ENCODE measurements at regions of chr16 and their contacts with region 1.

Region 1: GRCh38 chr16:31458844-31459721 is at the start of gene ARMC5:
- DNase-seq: peak; percentile 98
- ATAC-seq: peak; percentile 81
- H3K4me3 Mint-ChIP-seq: peak within 1 kb of the TSS; percentile 85
- H3K27ac Mint-ChIP-seq: peak within 1 kb of the TSS; percentile 94
- H3K4me1 Mint-ChIP-seq: peaks cover 42% of the 10 kb centered on the region
- H3K27me3 Mint-ChIP-seq: no peaks in the 10 kb centered on the region
- total RNA-seq, gene ARMC5: 7.0 to 7.9 TPM

Region 2: DNA sequence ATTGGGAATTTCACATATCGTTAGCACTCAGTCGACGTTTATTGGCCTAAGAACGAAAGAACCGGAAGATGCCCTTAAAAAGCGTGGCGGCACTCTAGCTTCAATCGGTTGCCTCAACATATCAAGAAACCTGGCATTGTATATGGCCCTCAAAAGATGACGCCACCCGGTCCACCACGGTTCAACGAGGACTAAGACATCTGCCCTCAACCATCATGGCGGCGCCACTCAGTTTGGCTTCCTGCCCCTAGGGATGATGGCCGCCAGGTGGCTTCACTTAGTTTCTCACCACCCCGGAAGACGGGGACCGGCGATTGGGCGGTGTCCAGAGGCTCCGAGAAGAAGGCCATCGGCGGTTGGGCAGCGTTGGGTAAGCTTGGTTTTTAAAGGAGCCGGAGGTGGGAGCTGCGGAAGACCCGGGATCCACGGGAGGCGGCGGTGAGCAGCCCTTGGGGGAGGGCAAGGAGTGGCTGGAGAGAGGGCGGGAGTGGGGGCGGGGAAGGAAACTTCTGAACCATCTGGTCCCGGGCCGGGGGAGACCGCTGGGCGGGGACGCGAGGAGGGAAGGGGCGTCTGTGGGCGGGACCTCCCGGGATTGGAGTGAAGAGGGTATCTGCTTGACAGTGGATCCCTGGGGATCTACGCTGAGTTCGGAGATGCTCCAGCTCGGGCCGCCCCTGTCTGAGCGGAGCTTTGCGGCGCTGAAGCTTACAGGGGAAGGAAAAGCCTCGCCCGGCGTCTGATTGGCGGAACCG is 808.5 kb before region 1 on chr16 and contains the start of gene PRR14:
- CTCF ChIA-PET with region 1: no interaction called
- POLR2A ChIA-PET with region 1: no interaction called
- intact Hi-C with region 1: loop called in 1 of 2 experiments (anchors 2 kb)
- DNase-seq: peak; percentile 100
- ATAC-seq: peak; percentile 82
- H3K4me3 Mint-ChIP-seq: peak within 1 kb of the TSS; percentile 95
- H3K27ac Mint-ChIP-seq: peak within 1 kb of the TSS; percentile 97
- H3K4me1 Mint-ChIP-seq: peaks cover 21% of the 10 kb centered on the region
- H3K27me3 Mint-ChIP-seq: no peaks in the 10 kb centered on the region
- total RNA-seq, gene PRR14: 76.8 to 77.8 TPM

Region 3: GRCh38 chr16:30997000-30997886 is 461.8 kb before region 1 on chr16:
- CTCF ChIA-PET with region 1: no interaction called
- POLR2A ChIA-PET with region 1: no interaction called
- intact Hi-C with region 1: loop called in 1 of 2 experiments (anchors 1 kb)
- DNase-seq: peak; percentile 94
- ATAC-seq: peak; percentile 95
- H3K4me3 Mint-ChIP-seq: peak overlapping the region; percentile 72
- H3K27ac Mint-ChIP-seq: no peak overlapping the region
- H3K4me1 Mint-ChIP-seq: peaks cover 16% of the 10 kb centered on the region
- H3K27me3 Mint-ChIP-seq: peaks cover 3% of the 10 kb centered on the region

Region 4: DNA sequence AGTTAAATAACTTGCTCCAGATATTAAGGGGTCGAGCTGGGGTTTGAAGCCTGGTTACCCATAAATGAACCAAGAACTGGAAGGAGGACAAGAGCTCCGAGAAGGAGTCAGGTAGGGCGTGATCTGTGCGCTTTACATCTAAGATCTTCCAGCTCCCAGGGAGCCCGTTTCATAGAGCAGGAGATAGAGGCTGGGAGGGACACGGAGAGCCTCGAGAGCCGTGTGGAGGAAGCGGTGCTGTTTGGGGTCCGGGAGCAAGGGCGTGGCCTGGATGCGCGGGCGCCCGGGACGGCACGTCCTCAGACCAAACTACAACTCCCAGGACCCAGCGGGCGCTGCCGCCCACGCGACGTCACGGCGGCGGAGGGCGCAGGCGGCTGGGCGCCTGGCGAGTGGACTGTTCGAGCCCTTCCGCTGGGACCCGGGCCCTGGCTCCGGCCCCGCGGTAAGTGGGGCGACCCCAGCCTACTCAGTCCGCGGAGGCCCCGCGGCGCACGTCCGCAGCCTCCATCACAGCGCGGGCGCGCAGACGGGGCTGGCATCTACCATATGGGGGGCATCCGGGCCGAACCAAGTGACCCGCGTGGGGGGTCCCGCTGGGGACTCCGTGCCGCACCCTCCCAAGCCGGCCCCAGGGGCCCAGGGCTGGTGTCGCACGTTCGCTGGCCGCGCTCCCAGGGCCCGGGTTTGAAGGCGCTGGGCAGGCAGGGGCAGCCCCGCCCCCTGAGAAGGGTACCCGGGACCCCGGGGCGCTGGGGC is 350.9 kb before region 1 on chr16 and contains the start of gene BCKDK:
- CTCF ChIA-PET with region 1: no interaction called
- POLR2A ChIA-PET with region 1: no interaction called
- intact Hi-C with region 1: loop called in 1 of 2 experiments (anchors 2 kb)
- DNase-seq: peak; percentile 90
- ATAC-seq: peak; percentile 79
- H3K4me3 Mint-ChIP-seq: peak within 1 kb of the TSS; percentile 86
- H3K27ac Mint-ChIP-seq: peak within 1 kb of the TSS; percentile 96
- H3K4me1 Mint-ChIP-seq: peaks cover 22% of the 10 kb centered on the region
- H3K27me3 Mint-ChIP-seq: no peaks in the 10 kb centered on the region
- total RNA-seq, gene BCKDK: 50.0 to 53.3 TPM

Region 5: DNA sequence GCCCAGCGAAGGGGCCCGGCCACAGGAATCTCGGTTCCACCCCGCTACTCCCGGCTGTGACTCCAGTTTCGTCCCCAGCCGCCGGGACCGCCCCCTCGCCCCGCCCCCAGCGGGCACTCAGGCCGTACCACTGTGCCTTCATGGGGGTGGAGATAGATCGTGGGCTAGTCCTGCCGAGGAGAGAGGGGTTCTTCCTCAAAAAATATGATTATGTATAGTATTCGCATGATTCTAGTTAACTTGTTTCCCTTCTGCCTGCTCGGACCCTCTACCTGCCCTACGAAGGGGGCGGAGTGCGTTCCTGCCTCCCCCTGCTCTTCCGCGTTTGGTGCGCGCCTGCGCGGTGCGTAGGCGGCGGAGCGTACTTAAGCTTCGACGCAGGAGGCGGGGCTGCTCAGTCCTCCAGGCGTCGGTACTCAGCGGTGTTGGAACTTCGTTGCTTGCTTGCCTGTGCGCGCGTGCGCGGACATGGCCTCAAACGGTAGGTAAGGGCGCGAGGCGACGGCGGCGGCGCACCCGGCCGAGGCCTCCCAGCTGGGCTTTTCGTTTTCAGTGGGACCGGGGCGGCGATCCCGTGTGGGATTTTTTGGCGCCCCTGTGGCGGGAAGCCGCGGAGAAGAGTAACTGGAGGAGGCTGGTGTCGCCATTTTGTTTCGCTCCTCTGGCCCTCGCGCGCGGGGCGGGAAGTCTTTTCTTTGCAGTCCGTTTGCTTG is 279.2 kb before region 1 on chr16 and contains the start of gene FUS:
- CTCF ChIA-PET with region 1: interaction called, 3 read pairs
- POLR2A ChIA-PET with region 1: interaction called, 11 read pairs
- intact Hi-C with region 1: loop called (anchors 1 kb)
- DNase-seq: peak; percentile 94
- ATAC-seq: peak; percentile 56
- H3K4me3 Mint-ChIP-seq: peak within 1 kb of the TSS; percentile 95
- H3K27ac Mint-ChIP-seq: peak within 1 kb of the TSS; percentile 99
- H3K4me1 Mint-ChIP-seq: peaks cover 51% of the 10 kb centered on the region
- H3K27me3 Mint-ChIP-seq: no peaks in the 10 kb centered on the region
- total RNA-seq, gene FUS: 647 to 648 TPM

Region 6: DNA sequence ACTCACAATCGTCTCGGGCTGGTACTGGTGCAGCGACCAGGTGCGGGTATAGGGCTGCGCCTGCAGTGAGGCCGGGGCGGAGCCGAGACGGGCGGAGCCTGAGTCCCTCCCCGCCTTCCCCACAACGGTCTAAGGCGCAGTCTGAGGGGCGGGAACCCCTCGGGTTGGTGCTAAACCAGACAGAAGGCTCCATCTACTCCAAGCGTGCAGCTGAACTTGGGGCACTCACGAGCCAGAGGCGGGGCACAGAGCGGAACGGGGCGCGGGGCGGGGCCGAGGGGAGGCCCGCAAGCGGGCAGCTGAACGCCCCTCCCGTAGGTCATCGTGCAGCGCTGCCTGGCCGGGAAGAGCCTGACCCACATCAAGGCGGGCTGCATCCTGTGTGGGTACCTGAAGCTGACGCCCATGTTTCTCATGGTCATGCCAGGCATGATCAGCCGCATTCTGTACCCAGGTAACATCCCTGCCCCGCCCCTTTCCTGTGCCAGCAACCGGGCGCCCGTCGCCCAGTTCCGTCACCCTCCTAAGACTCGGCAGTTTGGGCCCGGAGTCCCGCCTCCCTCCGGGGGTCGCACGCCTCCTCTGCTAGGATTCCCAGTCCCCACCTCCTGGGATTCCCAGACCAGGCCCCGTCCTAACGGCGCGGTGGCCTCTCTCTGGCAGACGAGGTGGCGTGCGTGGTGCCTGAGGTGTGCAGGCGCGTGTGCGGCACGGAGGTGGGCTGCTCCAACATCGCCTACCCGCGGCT is 28.8 kb after region 1 on chr16:
- CTCF ChIA-PET with region 1: interaction called, 6 read pairs
- POLR2A ChIA-PET with region 1: no interaction called
- intact Hi-C with region 1: loop called (anchors 1 kb)
- DNase-seq: peak; percentile 74
- ATAC-seq: peak; percentile 93
- H3K4me3 Mint-ChIP-seq: peak overlapping the region; percentile 77
- H3K27ac Mint-ChIP-seq: no peak overlapping the region
- H3K4me1 Mint-ChIP-seq: peaks cover 6% of the 10 kb centered on the region
- H3K27me3 Mint-ChIP-seq: peaks cover 2% of the 10 kb centered on the region

Region 7: GRCh38 chr16:31713071-31713944 is 254.2 kb after region 1 on chr16:
- CTCF ChIA-PET with region 1: interaction called, 8 read pairs
- POLR2A ChIA-PET with region 1: interaction called, 3 read pairs
- intact Hi-C with region 1: loop called in 1 of 2 experiments (anchors 1 kb)
- DNase-seq: peak; percentile 95
- ATAC-seq: peak; percentile 91
- H3K4me3 Mint-ChIP-seq: peak overlapping the region; percentile 96
- H3K27ac Mint-ChIP-seq: peak overlapping the region; percentile 99
- H3K4me1 Mint-ChIP-seq: peaks cover 47% of the 10 kb centered on the region
- H3K27me3 Mint-ChIP-seq: no peaks in the 10 kb centered on the region

Measured in activated CD4-positive, alpha-beta T cell treated with anti-CD3 and anti-CD28 coated beads for 36 hours (primary cell).